ENCODE measurements at regions of chr15 and their contacts with region 1.

Region 1: DNA sequence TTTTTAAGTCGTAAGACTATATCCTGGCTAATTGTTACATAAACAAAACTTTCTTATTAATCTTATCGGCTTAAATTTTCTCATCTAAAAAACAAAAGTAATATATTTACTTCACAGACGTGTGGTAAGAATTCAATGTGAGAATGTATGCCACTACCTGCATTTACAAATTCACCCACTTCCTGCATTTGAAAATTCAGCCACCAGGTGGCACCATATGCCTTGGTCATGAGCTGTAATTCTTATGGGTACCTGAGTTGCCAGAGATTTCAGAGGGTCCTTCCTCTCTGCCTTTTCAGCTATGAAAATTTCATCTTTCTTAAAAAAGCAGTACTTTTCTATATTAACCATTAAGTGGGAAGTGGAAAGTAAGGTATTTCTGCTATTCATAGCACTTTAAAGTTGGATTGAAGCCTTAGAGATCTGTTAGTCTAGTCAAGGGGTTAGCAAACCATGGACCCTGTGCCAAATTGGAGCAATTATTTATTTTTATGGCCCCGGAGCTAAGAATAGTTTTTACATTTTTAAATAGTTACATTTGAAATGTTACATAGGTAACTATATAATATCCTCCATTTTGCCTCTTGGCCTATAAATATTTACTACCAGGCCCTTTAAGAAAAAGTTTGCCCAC is 127.8 kb downstream of the HCN4 start:
- DNase-seq: peak; percentile 72
- ATAC-seq: peak; percentile 36
- H3K4me3 ChIP-seq: no peak overlapping the region
- H3K4me3 Mint-ChIP-seq: no peak overlapping the region
- H3K27ac ChIP-seq: no peak overlapping the region
- H3K27ac Mint-ChIP-seq: no peak overlapping the region
- H3K4me1 ChIP-seq: no peaks in the 10 kb centered on the region
- H3K4me1 Mint-ChIP-seq: no peaks in the 10 kb centered on the region
- H3K27me3 ChIP-seq: no peaks in the 10 kb centered on the region
- H3K27me3 Mint-ChIP-seq: peaks cover 22% of the 10 kb centered on the region
- CTCF ChIP-seq: peak; percentile 94

Region 2: GRCh38 chr15:73105064-73105463 is 135.9 kb before region 1 on chr15:
- CTCF ChIA-PET with region 1: no interaction called
- POLR2A ChIA-PET with region 1: no interaction called
- intact Hi-C with region 1: no loop called
- DNase-seq: no peak
- ATAC-seq: no peak
- H3K4me3 ChIP-seq: no peak overlapping the region
- H3K4me3 Mint-ChIP-seq: no peak overlapping the region
- H3K27ac ChIP-seq: no peak overlapping the region
- H3K27ac Mint-ChIP-seq: no peak overlapping the region
- H3K4me1 ChIP-seq: no peaks in the 10 kb centered on the region
- H3K4me1 Mint-ChIP-seq: no peaks in the 10 kb centered on the region
- H3K27me3 ChIP-seq: peaks cover 0 to 7% (median 0%) of the 10 kb centered on the region in 4 experiments
- H3K27me3 Mint-ChIP-seq: peaks cover 13% of the 10 kb centered on the region
- CTCF ChIP-seq: no peak

Region 3: DNA sequence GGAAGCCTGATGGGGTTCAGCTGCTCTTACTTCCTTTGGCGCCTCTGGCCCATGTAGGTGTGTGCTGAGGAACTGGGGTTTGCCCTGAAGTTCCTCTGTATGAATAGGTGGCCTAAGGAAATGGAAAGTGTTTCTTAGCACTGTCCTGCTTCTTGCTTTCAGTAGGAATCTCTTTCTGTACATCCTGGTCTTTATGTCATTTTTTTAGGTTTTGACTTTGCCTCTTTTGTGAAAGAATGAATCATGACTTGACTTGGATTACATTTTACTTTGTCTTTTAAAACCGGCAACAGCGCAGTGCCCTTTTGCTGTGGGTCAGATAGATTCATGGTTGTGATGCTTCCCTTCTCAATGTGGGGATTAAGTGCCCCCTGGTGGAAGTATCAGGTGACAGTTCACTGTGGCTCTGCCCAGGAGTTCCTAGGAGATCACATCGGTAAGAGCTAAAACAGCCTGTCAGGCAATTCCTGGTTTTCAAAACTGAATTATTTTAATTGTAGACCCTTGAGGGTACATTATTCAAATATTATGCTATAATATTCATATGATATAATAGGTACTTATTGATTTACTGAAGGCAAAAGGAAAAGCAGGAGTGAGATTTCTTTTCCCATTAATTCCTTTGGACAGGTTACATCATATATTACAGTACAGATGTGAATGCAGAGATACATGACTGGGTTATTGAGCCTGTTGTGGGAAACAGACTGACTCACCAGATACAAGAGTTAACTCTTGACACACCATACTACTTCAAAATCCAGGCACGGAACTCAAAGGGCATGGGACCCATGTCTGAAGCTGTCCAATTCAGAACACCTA is 32.4 kb after region 1 on chr15:
- CTCF ChIA-PET with region 1: interaction called, 15 read pairs
- POLR2A ChIA-PET with region 1: no interaction called
- intact Hi-C with region 1: loop called (anchors 1 kb)
- DNase-seq: peak; percentile 53
- ATAC-seq: peak; percentile 45
- H3K4me3 ChIP-seq: no peak overlapping the region
- H3K4me3 Mint-ChIP-seq: no peak overlapping the region
- H3K27ac ChIP-seq: no peak overlapping the region
- H3K27ac Mint-ChIP-seq: no peak overlapping the region
- H3K4me1 ChIP-seq: peaks cover 0 to 3% of the 10 kb centered on the region in 2 donors
- H3K4me1 Mint-ChIP-seq: peaks cover 3% of the 10 kb centered on the region
- H3K27me3 ChIP-seq: no peaks in the 10 kb centered on the region
- H3K27me3 Mint-ChIP-seq: peaks cover 10% of the 10 kb centered on the region
- CTCF ChIP-seq: peak; percentile 87

Measured in B cell (primary cell).